ENCODE measurements at regions of chr6 and their contacts with region 1.

Region 1: DNA sequence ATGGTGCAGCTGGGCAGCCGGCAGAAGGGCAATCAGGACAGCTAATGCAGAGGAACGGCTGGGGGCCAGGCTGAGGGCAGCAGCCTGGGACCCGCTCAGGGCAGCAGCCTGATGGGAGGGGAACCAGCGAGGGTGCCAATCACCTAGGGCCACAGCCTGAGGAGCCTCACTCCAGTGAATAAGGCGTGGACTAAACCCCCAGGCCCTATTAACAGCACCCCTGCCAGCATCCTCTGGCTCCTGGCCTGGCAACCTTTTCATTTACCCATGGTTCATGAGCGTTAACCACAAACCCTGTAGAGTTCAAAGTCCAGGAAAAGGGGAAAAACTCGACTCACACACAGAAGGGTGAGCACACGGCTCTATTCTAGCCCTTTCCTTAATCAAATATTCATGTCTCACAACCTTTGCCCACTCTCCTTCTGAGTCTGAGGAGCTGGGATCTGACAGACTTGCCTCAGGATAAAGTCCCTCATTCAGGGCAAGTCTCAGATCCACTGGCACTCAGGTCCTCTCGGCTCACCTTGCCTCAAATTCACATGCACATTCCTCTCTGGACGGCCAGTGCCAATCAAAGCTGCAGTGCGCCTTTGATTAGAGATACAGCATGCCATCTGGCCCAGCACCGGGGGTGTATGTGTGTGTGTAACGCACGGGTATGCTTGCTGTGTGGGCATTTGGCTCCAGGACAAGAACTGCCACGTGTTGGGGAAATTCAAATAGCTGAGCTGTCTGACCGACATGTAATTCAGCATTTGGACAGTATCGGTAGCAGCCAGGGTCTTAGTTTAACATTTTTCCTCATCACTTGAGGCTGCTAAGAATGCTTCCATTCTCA is 86.9 kb upstream of the TRAF3IP2 start:
- DNase-seq: peak in 2 of 9 experiments; percentile 22 to 44
- ATAC-seq: peak; percentile 30
- H3K4me3 ChIP-seq: no peak overlapping the region
- H3K4me3 Mint-ChIP-seq: peak overlapping the region; percentile 37
- H3K27ac ChIP-seq: peak overlapping the region in 1 of 2 experiments; percentile 45
- H3K27ac Mint-ChIP-seq: peak overlapping the region; percentile 67
- H3K4me1 ChIP-seq: peaks cover 26% of the 10 kb centered on the region
- H3K4me1 Mint-ChIP-seq: peaks cover 68% of the 10 kb centered on the region
- H3K27me3 ChIP-seq: no peaks in the 10 kb centered on the region
- H3K27me3 Mint-ChIP-seq: no peaks in the 10 kb centered on the region
- CTCF ChIP-seq: no peak

Region 2: GRCh38 chr6:111679126-111679858 is 13.3 kb before region 1 on chr6:
- CTCF ChIA-PET with region 1: no interaction called
- POLR2A ChIA-PET with region 1: no interaction called
- intact Hi-C with region 1: loop called in 1 of 2 experiments (anchors 2 kb)
- DNase-seq: no peak
- ATAC-seq: no peak
- H3K4me3 ChIP-seq: no peak overlapping the region
- H3K4me3 Mint-ChIP-seq: no peak overlapping the region
- H3K27ac ChIP-seq: peak overlapping the region in 1 of 2 experiments; percentile 0
- H3K27ac Mint-ChIP-seq: peak overlapping the region; percentile 78
- H3K4me1 ChIP-seq: peaks cover 27% of the 10 kb centered on the region
- H3K4me1 Mint-ChIP-seq: peaks cover 83% of the 10 kb centered on the region
- H3K27me3 ChIP-seq: no peaks in the 10 kb centered on the region
- H3K27me3 Mint-ChIP-seq: no peaks in the 10 kb centered on the region
- CTCF ChIP-seq: no peak

Measured in CD8-positive, alpha-beta T cell (primary cell).